ENCODE measurements at regions of chr4 and their contacts with region 1.

Region 1: GRCh38 chr4:54525602-54526001 is 132.2 kb upstream of the KIT start:
- DNase-seq: no peak
- ATAC-seq: no peak
- H3K4me3 ChIP-seq: no peak overlapping the region
- H3K4me3 Mint-ChIP-seq: no peak overlapping the region
- H3K27ac ChIP-seq: no peak overlapping the region
- H3K27ac Mint-ChIP-seq: no peak overlapping the region
- H3K4me1 ChIP-seq: no peaks in the 10 kb centered on the region
- H3K4me1 Mint-ChIP-seq: no peaks in the 10 kb centered on the region
- H3K27me3 ChIP-seq: no peaks in the 10 kb centered on the region
- H3K27me3 Mint-ChIP-seq: no peaks in the 10 kb centered on the region
- CTCF ChIP-seq: no peak

Region 2: DNA sequence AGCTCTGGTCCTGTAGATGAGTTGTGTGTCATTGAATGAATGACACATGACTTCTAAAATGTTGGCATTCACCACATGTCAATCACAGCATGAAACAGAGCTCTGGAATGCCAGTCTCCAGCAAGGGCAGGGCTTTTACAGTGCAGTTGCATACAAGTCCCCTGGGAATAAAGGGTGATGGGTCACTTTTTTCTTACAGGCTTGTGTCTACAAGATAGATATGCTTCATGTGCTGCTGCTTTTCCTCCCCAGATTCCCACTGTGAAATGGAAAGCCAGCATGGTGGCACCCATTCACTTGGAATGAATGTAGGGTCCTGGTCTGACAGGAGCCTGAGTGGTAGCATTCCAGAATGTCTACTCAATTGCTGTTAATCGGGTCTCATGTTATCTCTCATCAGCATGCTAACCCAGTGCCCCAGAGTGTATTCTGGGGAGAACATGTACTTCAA is 26.9 kb before region 1 on chr4:
- CTCF ChIA-PET with region 1: no interaction called
- POLR2A ChIA-PET with region 1: no interaction called
- intact Hi-C with region 1: loop called in 1 of 2 experiments (anchors 1 kb)
- DNase-seq: no peak
- ATAC-seq: no peak
- H3K4me3 ChIP-seq: no peak overlapping the region
- H3K4me3 Mint-ChIP-seq: no peak overlapping the region
- H3K27ac ChIP-seq: no peak overlapping the region
- H3K27ac Mint-ChIP-seq: no peak overlapping the region
- H3K4me1 ChIP-seq: no peaks in the 10 kb centered on the region
- H3K4me1 Mint-ChIP-seq: no peaks in the 10 kb centered on the region
- H3K27me3 ChIP-seq: no peaks in the 10 kb centered on the region
- H3K27me3 Mint-ChIP-seq: peaks cover 5% of the 10 kb centered on the region
- CTCF ChIP-seq: no peak

Region 3: DNA sequence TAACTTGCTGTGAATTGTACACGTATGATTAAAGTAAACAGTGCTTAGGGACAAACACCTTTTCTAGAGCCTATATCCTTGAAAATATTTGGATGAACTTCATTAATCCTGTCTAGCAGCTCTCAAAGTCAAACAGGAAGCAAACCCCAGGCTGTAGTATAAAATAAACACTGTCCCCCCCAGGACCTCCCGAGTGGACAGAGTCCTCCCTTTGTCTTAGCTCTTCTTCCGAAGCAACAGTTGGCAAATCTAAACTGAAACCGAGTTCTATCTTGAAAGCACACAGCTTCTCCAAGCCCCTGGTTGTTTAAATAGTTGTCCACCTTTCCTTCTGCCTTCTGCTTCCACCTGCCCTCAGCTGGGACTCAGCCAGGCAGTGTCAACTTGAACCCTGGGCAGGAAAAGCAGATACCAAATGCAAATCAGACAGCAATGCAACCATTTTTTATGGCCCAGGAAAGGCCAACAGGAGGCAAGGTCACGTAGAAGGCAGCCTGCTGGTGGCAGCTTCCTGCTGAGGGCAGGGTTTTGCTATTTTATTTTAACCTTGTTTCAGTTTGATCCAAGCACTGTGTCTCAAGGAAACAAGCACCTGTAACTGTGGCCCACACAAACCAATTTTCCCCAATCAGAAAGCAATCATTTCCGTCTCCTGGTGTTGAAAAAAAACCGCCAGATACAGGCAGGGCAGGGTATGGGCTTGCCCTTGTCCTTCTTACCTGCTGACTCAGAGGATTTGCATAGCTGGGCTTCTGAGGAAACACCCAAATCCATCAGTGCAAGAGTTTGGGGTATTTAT is 21.9 kb after region 1 on chr4:
- CTCF ChIA-PET with region 1: no interaction called
- POLR2A ChIA-PET with region 1: no interaction called
- intact Hi-C with region 1: no loop called
- DNase-seq: no peak
- ATAC-seq: no peak
- H3K4me3 ChIP-seq: no peak overlapping the region
- H3K4me3 Mint-ChIP-seq: no peak overlapping the region
- H3K27ac ChIP-seq: no peak overlapping the region
- H3K27ac Mint-ChIP-seq: no peak overlapping the region
- H3K4me1 ChIP-seq: no peaks in the 10 kb centered on the region
- H3K4me1 Mint-ChIP-seq: no peaks in the 10 kb centered on the region
- H3K27me3 ChIP-seq: no peaks in the 10 kb centered on the region
- H3K27me3 Mint-ChIP-seq: peaks cover 4% of the 10 kb centered on the region
- CTCF ChIP-seq: no peak

Region 4: GRCh38 chr4:54658252-54659093 is 132.9 kb after region 1 on chr4:
- CTCF ChIA-PET with region 1: no interaction called
- POLR2A ChIA-PET with region 1: no interaction called
- intact Hi-C with region 1: no loop called
- DNase-seq: peak in 6 of 14 experiments; percentile 9 to 64 (median 29)
- ATAC-seq: peak; percentile 43
- H3K4me3 ChIP-seq: peak overlapping the region; percentile 55
- H3K4me3 Mint-ChIP-seq: peak overlapping the region; percentile 70
- H3K27ac ChIP-seq: no peak overlapping the region
- H3K27ac Mint-ChIP-seq: no peak overlapping the region
- H3K4me1 ChIP-seq: peaks cover 24% of the 10 kb centered on the region
- H3K4me1 Mint-ChIP-seq: peaks cover 25% of the 10 kb centered on the region
- H3K27me3 ChIP-seq: peaks cover 43 to 52% of the 10 kb centered on the region in 2 experiments
- H3K27me3 Mint-ChIP-seq: peaks cover 71% of the 10 kb centered on the region
- CTCF ChIP-seq: no peak

Measured in CD4-positive, alpha-beta T cell (primary cell).